ENCODE measurements at regions of chr12 and their contacts with region 1.

Region 1: GRCh38 chr12:56468216-56469006 is at the start of gene SPRYD4:
- DNase-seq: peak; percentile 86
- H3K4me3 ChIP-seq: peak within 1 kb of the TSS; percentile 99
- CTCF ChIP-seq: peak; percentile 36

Region 2: GRCh38 chr12:56359851-56360767 is 108.3 kb before region 1 on chr12 and contains the start of gene STAT2:
- in situ Hi-C with region 1: loop called (anchors 25 kb)
- DNase-seq: peak; percentile 100
- H3K4me3 ChIP-seq: peak within 1 kb of the TSS; percentile 87
- CTCF ChIP-seq: no peak

Region 3: GRCh38 chr12:56425193-56425592 is 43.2 kb before region 1 on chr12:
- in situ Hi-C with region 1: no loop called
- DNase-seq: no peak
- H3K4me3 ChIP-seq: no peak overlapping the region
- CTCF ChIP-seq: no peak

Region 4: GRCh38 chr12:56510786-56511185 is 42.4 kb after region 1 on chr12:
- in situ Hi-C with region 1: no loop called
- DNase-seq: no peak
- H3K4me3 ChIP-seq: no peak overlapping the region
- CTCF ChIP-seq: no peak